ENCODE measurements at regions of chr2 and their contacts with region 1.

Region 1: GRCh38 chr2:108583903-108584520 is 49.7 kb downstream of the LIMS1 start:
- DNase-seq: peak; percentile 66
- H3K4me3 ChIP-seq: no peak overlapping the region
- H3K27ac ChIP-seq: no peak overlapping the region
- H3K4me1 ChIP-seq: peaks cover 27 to 60% (median 34%) of the 10 kb centered on the region in 4 donors
- H3K27me3 ChIP-seq: no peaks in the 10 kb centered on the region
- CTCF ChIP-seq: peak; percentile 68 to 79 (median 74)
- EP300 ChIP-seq: no peak
- POLR2A ChIP-seq: no peak

Region 2: DNA sequence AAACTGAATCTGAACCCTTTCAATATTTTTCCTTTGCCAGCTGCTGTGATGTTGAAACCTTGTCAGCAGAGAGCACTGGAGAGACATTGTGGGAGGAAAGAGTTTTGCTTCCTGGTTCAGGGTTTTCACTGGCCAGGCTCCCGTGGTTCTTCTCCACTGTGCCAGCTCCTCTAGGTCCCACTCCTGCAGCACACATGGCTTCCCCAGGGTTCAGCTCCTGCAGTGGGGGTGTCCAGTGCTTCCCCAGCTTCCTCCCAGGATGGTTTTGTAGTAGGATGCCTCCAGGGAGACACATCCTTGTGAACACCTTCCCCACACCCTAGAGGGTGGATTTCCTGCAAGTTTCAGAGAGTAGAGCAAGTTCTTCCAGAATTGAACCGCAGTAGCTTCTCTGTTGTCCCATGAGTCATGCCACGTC is 368.2 kb before region 1 on chr2:
- in situ Hi-C with region 1: loop called in 2 of 4 experiments (anchors 25 kb)
- intact Hi-C with region 1: no loop called
- DNase-seq: peak; percentile 27
- H3K4me3 ChIP-seq: no peak overlapping the region
- H3K27ac ChIP-seq: no peak overlapping the region
- H3K4me1 ChIP-seq: peaks cover 0 to 6% (median 3%) of the 10 kb centered on the region in 4 donors
- H3K27me3 ChIP-seq: no peaks in the 10 kb centered on the region
- CTCF ChIP-seq: peak; percentile 8 to 37 (median 32)
- EP300 ChIP-seq: no peak
- POLR2A ChIP-seq: no peak

Region 3: GRCh38 chr2:108348816-108349570 is 235.0 kb before region 1 on chr2:
- in situ Hi-C with region 1: loop called in 1 of 4 experiments (anchors 10 kb)
- intact Hi-C with region 1: loop called (anchors 10 kb)
- DNase-seq: no peak
- H3K4me3 ChIP-seq: no peak overlapping the region
- H3K27ac ChIP-seq: no peak overlapping the region
- H3K4me1 ChIP-seq: peaks cover 0 to 7% (median 0%) of the 10 kb centered on the region in 4 donors
- H3K27me3 ChIP-seq: no peaks in the 10 kb centered on the region
- CTCF ChIP-seq: no peak
- EP300 ChIP-seq: no peak
- POLR2A ChIP-seq: no peak

Region 4: DNA sequence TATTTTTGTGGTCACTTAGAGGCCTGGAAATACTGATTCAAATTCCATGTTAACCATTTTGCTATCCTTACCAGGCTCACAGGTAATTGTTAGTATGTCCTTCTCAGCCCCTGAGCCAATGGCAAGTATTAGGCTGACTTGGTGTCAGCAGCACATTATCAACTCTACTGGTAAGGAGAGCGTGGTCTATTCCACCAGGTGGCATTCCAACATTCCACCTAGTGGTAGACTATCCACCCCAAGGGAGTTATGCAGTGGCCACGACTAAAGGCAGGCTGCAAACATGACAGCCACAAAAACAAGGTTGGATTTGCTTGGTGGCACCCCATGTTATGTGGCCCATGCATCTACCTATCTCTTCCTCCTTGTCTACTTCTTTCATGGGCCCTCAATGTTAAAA is 166.8 kb before region 1 on chr2:
- in situ Hi-C with region 1: loop called in 1 of 4 experiments (anchors 25 kb)
- intact Hi-C with region 1: no loop called
- DNase-seq: peak; percentile 22
- H3K4me3 ChIP-seq: no peak overlapping the region
- H3K27ac ChIP-seq: no peak overlapping the region
- H3K4me1 ChIP-seq: no peaks in the 10 kb centered on the region
- H3K27me3 ChIP-seq: no peaks in the 10 kb centered on the region
- CTCF ChIP-seq: peak; percentile 11 to 62 (median 38)
- EP300 ChIP-seq: no peak
- POLR2A ChIP-seq: no peak

Region 5: DNA sequence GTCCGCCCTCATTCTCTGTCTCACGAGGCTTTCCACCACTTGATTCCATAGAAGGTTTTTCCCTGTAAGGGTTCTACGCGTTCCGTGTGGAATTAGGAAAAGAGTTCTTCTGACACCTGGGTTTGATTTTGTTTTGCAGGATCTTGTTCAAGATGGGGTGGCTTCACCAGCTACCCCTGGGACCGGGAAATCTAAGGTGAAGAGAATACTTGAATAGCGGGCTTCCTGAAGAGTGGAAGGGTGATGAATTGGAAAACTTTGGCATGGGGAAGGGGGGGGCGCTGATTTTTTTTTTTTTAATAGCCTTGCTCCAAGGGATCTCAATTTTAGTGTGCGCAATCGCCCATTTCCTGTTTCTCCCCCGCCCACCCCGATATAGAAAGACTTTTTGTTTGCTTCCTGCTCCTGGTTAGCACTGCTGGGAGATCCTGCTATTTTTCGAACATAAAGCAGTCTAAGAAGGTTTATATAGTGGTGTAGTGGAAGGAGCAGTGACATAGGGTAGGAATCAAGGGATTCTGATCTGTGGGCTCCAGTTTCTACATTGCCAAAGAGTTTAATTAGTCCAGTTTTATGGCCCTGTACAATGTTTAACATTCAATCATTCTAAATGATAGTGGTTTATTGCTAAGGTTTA is 134.4 kb before region 1 on chr2:
- in situ Hi-C with region 1: loop called in 1 of 4 experiments (anchors 25 kb)
- intact Hi-C with region 1: no loop called
- DNase-seq: peak; percentile 42
- H3K4me3 ChIP-seq: peak overlapping the region; percentile 35 to 93 (median 61)
- H3K27ac ChIP-seq: peak overlapping the region; percentile 87 to 96 (median 90)
- H3K4me1 ChIP-seq: peaks cover 0 to 37% (median 20%) of the 10 kb centered on the region in 4 donors
- H3K27me3 ChIP-seq: no peaks in the 10 kb centered on the region
- CTCF ChIP-seq: no peak
- EP300 ChIP-seq: no peak
- POLR2A ChIP-seq: no peak

Region 6: GRCh38 chr2:108533832-108534583 is 50.0 kb before region 1 on chr2 and contains the start of gene LIMS1:
- in situ Hi-C with region 1: loop called in 1 of 4 experiments (anchors 10 kb)
- intact Hi-C with region 1: no loop called
- DNase-seq: peak; percentile 93
- H3K4me3 ChIP-seq: peak within 1 kb of the TSS; percentile 72 to 93 (median 84)
- H3K27ac ChIP-seq: peak within 1 kb of the TSS; percentile 94 to 99 (median 98)
- H3K4me1 ChIP-seq: peaks cover 7 to 49% (median 22%) of the 10 kb centered on the region in 4 donors
- H3K27me3 ChIP-seq: no peaks in the 10 kb centered on the region
- CTCF ChIP-seq: no peak
- EP300 ChIP-seq: no peak
- POLR2A ChIP-seq: peak; percentile 82
- total RNA-seq, gene LIMS1: 4.5 to 41.0 (median 24.1) TPM

Region 7: GRCh38 chr2:109185821-109186570 is 602.0 kb after region 1 on chr2:
- in situ Hi-C with region 1: no loop called
- intact Hi-C with region 1: no loop called
- DNase-seq: peak; percentile 30
- H3K4me3 ChIP-seq: no peak overlapping the region
- H3K27ac ChIP-seq: peak overlapping the region; percentile 66 to 77 (median 74)
- H3K4me1 ChIP-seq: peaks cover 4 to 14% (median 9%) of the 10 kb centered on the region in 4 donors
- H3K27me3 ChIP-seq: no peaks in the 10 kb centered on the region
- CTCF ChIP-seq: no peak
- EP300 ChIP-seq: no peak
- POLR2A ChIP-seq: no peak

Measured in transverse colon (tissue), 4 donors.